Naive thymus-derived CD4-positive, alpha-beta T cell (primary cell): ENCODE measurements at regions of chr20 and their contacts with region 1.

Region 1: GRCh38 chr20:18566892-18567742 is at the start of gene SMIM26:
- DNase-seq: peak; percentile 85 to 94 (median 92)
- ATAC-seq: peak; percentile 99
- H3K4me3 ChIP-seq: peak within 1 kb of the TSS; percentile 76
- H3K4me3 Mint-ChIP-seq: peak within 1 kb of the TSS; percentile 93 to 99 (median 96)
- H3K27ac ChIP-seq: peak within 1 kb of the TSS; percentile 95
- H3K27ac Mint-ChIP-seq: peak within 1 kb of the TSS; percentile 92 to 100 (median 99)
- H3K4me1 ChIP-seq: peaks cover 4 to 15% of the 10 kb centered on the region in 2 donors
- H3K4me1 Mint-ChIP-seq: peaks cover 14 to 25% (median 22%) of the 10 kb centered on the region in 7 donors
- H3K27me3 ChIP-seq: no peaks in the 10 kb centered on the region
- H3K27me3 Mint-ChIP-seq: no peaks in the 10 kb centered on the region
- total RNA-seq, gene SMIM26: 51.2 to 78.4 (median 69.5) TPM

Region 2: DNA sequence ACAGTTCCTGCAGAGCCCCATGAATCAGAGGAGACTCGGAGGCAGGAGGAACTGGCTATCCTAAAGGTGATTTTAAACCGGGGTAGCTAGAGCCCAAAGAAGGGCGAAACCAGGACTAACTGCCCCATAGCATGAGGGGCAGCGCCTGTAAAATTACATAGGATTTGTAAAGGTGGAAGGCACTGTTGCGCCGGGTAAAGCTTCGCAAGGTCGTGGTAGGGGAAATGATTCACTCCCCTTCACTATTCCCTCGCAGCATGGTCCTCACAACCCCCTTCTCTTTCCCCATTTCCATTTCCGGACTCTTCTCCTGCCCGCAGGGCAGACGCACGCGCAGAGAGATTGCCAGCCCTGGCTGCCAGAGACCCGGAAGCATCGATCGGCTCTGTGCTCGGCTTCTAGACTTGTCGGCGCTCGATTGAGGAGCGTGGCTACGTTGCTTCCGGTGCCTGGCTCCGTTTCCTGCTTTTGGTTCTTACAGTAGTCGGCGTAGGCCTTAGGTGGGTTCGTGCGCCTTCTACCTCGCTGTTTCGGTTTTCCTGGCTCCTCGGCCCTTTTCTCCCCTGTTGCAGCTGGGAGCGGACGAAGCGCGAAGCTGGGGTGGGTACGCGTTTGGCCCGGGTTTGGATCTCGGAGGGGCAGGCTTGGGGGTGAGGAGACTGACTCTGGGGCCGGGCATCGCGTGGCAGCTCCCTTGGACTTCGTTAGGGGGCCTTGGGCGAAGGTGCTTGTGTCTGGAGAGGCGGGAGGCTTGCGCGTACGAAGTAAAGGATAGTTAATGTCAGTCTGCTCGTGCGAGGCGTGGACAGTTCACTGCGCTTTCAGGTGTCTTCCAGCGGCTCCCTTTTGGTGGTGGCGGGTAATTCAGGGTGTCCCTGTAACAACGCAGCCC is 1837.3 kb before region 1 on chr20 and contains the start of gene SNRPB2:
- CTCF ChIA-PET with region 1: no interaction called
- POLR2A ChIA-PET with region 1: no interaction called
- intact Hi-C with region 1: loop called in 1 of 2 experiments (anchors 2 kb)
- DNase-seq: peak; percentile 75 to 94 (median 90)
- ATAC-seq: peak; percentile 98
- H3K4me3 ChIP-seq: peak within 1 kb of the TSS; percentile 93
- H3K4me3 Mint-ChIP-seq: peak within 1 kb of the TSS; percentile 87 to 100 (median 99)
- H3K27ac ChIP-seq: peak within 1 kb of the TSS; percentile 94
- H3K27ac Mint-ChIP-seq: peak within 1 kb of the TSS; percentile 98 to 100 (median 100)
- H3K4me1 ChIP-seq: peaks cover 30 to 40% of the 10 kb centered on the region in 2 donors
- H3K4me1 Mint-ChIP-seq: peaks cover 32 to 60% (median 56%) of the 10 kb centered on the region in 7 donors
- H3K27me3 ChIP-seq: no peaks in the 10 kb centered on the region
- H3K27me3 Mint-ChIP-seq: peaks cover 9 to 25% (median 15%) of the 10 kb centered on the region in 5 donors
- total RNA-seq, gene SNRPB2: 30.8 to 97.0 (median 40.0) TPM

Region 3: DNA sequence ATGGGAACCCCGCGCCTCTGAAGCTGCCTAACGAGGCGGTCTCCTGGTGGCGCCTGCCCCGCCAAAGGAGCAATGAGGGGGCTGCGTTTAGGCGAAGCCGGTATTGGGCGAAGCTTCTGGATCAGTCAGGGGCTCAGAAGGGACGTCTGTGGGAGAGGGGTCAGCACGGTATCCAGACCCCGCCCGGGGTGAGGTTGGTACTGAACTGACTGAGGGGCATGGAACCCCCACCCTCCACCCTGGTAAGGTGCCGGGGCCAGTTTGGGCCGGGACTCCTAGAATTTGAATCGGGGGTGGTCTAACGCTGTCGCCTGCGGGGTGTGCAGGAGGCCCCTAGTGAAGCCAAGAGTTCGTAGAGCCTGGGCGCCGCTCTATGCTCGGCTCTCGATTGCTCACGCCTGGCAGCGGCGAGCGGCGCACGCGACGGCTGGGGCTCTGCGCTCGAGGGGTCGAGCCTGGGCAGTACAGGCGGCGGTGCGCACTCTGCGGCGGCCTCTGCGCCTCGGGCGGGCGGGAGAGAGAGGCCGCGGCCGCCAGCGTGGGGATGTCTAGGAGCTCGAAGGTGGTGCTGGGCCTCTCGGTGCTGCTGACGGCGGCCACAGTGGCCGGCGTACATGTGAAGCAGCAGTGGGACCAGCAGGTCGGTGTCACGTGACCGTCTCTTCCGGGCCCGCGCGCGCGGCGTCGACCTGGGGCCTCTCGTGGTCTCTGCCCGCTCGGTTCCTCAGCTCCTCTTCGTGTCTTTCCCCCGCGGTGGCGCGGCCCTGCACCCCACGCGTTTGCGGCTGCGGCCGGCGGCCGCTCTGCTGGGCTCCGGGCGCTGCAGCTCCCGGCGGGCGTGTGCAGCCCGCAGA is 429.5 kb before region 1 on chr20 and contains the starts of genes KAT14 and PET117:
- CTCF ChIA-PET with region 1: no interaction called
- POLR2A ChIA-PET with region 1: interaction called, 3 read pairs
- intact Hi-C with region 1: loop called in 1 of 2 experiments (anchors 1 kb)
- DNase-seq: peak; percentile 85 to 96 (median 93)
- ATAC-seq: peak; percentile 98
- H3K4me3 ChIP-seq: peak within 1 kb of the TSS; percentile 99
- H3K4me3 Mint-ChIP-seq: peak within 1 kb of the TSS; percentile 76 to 92 (median 88)
- H3K27ac ChIP-seq: peak within 1 kb of the TSS; percentile 89
- H3K27ac Mint-ChIP-seq: peak within 1 kb of the TSS; percentile 85 to 95 (median 92)
- H3K4me1 ChIP-seq: peaks cover 13 to 15% of the 10 kb centered on the region in 2 donors
- H3K4me1 Mint-ChIP-seq: peaks cover 23 to 44% (median 31%) of the 10 kb centered on the region in 7 donors
- H3K27me3 ChIP-seq: no peaks in the 10 kb centered on the region
- H3K27me3 Mint-ChIP-seq: peaks cover 0 to 7% (median 0%) of the 10 kb centered on the region in 5 donors
- total RNA-seq, gene KAT14: 12.3 to 26.7 (median 16.2) TPM
- total RNA-seq, gene PET117: 9.0 to 20.3 (median 11.7) TPM

Region 4: DNA sequence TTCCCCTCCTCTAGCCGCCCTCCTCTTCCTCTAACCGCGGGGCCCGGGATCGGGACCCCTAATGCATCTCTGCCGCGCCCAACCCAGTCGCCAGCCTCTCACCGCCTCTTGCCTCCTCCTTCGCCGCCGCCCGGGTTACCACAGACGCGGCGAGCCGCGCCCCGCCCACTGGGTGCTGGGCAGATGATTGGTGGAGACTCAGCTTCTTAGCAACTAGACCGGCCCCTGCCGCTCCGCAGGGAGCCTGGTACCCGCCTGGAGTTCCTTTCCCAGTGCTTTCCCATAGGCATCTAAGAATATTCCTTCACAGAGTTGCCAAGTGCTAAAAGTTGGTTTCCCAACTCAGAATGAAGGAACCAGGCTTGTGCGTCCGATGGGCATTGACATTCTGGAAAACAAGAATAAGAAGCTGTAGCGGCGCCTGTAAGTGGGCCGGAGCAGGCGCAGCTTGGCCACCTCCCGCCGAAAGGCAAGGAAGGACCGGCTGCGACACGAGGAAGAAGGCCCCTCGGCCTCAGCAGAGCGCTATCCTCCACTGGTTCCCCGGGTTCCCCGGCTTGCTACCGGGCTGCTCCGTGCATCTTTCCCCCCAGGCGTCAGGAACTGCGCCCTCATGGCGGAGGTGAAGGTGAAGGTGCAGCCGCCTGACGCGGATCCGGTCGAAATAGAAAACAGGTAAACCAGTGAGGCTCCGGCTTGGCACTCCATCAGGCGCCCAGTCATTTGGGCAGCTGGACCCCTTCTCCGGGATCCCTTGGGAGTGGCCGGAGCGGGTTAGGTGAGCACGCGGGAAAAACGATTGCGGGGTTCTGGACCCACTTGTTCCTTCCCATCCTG is 100.0 kb before region 1 on chr20 and contains the starts of genes DZANK1 and POLR3F:
- CTCF ChIA-PET with region 1: no interaction called
- POLR2A ChIA-PET with region 1: interaction called, 3 read pairs
- intact Hi-C with region 1: loop called (anchors 1 kb)
- DNase-seq: peak; percentile 85 to 93 (median 92)
- ATAC-seq: peak; percentile 97
- H3K4me3 ChIP-seq: peak within 1 kb of the TSS; percentile 93
- H3K4me3 Mint-ChIP-seq: peak within 1 kb of the TSS; percentile 89 to 99 (median 97)
- H3K27ac ChIP-seq: peak within 1 kb of the TSS; percentile 77
- H3K27ac Mint-ChIP-seq: peak within 1 kb of the TSS; percentile 93 to 99 (median 98)
- H3K4me1 ChIP-seq: peaks cover 7 to 14% of the 10 kb centered on the region in 2 donors
- H3K4me1 Mint-ChIP-seq: peaks cover 25 to 44% (median 37%) of the 10 kb centered on the region in 7 donors
- H3K27me3 ChIP-seq: no peaks in the 10 kb centered on the region
- H3K27me3 Mint-ChIP-seq: no peaks in the 10 kb centered on the region
- total RNA-seq, gene DZANK1: 1.2 to 3.5 (median 2.9) TPM
- total RNA-seq, gene POLR3F: 5.0 to 13.5 (median 11.5) TPM

Region 5: GRCh38 chr20:18507218-18508021 is 59.7 kb before region 1 on chr20 and contains the start of gene SEC23B:
- CTCF ChIA-PET with region 1: interaction called, 4 read pairs
- POLR2A ChIA-PET with region 1: interaction called, 20 read pairs
- intact Hi-C with region 1: loop called (anchors 1 kb)
- DNase-seq: peak; percentile 88 to 100 (median 99)
- ATAC-seq: peak; percentile 91
- H3K4me3 ChIP-seq: peak within 1 kb of the TSS; percentile 74
- H3K4me3 Mint-ChIP-seq: peak within 1 kb of the TSS; percentile 91 to 100 (median 100)
- H3K27ac ChIP-seq: peak within 1 kb of the TSS; percentile 90
- H3K27ac Mint-ChIP-seq: peak within 1 kb of the TSS; percentile 99 to 100 (median 100)
- H3K4me1 ChIP-seq: peaks cover 17 to 28% of the 10 kb centered on the region in 2 donors
- H3K4me1 Mint-ChIP-seq: peaks cover 25 to 59% (median 50%) of the 10 kb centered on the region in 7 donors
- H3K27me3 ChIP-seq: no peaks in the 10 kb centered on the region
- H3K27me3 Mint-ChIP-seq: peaks cover 0 to 2% (median 0%) of the 10 kb centered on the region in 5 donors
- total RNA-seq, gene SEC23B: 39.0 to 102 (median 40.9) TPM

Region 6: DNA sequence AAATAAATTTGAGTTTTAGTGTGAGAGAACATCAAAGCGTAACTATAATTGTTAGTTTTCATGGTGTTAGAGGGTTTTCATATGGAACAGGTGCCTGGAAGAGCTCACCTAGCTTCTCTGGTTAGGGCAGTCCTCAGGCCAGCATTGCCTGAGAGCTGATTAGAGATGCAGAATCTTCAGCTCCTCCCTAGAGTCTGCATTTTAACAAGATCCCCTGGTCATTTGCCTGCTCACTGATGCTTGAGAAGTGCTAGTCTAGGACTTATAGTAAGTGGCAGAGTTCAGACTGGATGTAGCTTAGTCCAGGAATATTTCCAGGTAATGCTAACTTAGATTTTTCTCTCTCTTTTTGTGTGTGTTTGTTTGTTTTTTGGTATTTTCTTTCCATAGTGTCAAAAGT is 21.6 kb before region 1 on chr20:
- CTCF ChIA-PET with region 1: no interaction called
- POLR2A ChIA-PET with region 1: no interaction called
- intact Hi-C with region 1: no loop called
- DNase-seq: no peak
- ATAC-seq: no peak
- H3K4me3 ChIP-seq: no peak overlapping the region
- H3K4me3 Mint-ChIP-seq: no peak overlapping the region
- H3K27ac ChIP-seq: no peak overlapping the region
- H3K27ac Mint-ChIP-seq: peak overlapping the region in 1 of 9 donors; percentile 34
- H3K4me1 ChIP-seq: no peaks in the 10 kb centered on the region
- H3K4me1 Mint-ChIP-seq: peaks cover 0 to 6% (median 0%) of the 10 kb centered on the region in 7 donors
- H3K27me3 ChIP-seq: no peaks in the 10 kb centered on the region
- H3K27me3 Mint-ChIP-seq: no peaks in the 10 kb centered on the region

Region 7: GRCh38 chr20:18793625-18794427 is 226.7 kb after region 1 on chr20:
- CTCF ChIA-PET with region 1: no interaction called
- POLR2A ChIA-PET with region 1: interaction called, 4 read pairs
- intact Hi-C with region 1: loop called (anchors 1 kb)
- DNase-seq: peak; percentile 62 to 94 (median 87)
- ATAC-seq: peak; percentile 99
- H3K4me3 ChIP-seq: peak overlapping the region; percentile 87
- H3K4me3 Mint-ChIP-seq: peak overlapping the region; percentile 85 to 99 (median 96)
- H3K27ac ChIP-seq: peak overlapping the region; percentile 92
- H3K27ac Mint-ChIP-seq: peak overlapping the region; percentile 97 to 100 (median 99)
- H3K4me1 ChIP-seq: peaks cover 8% of the 10 kb centered on the region in 2 donors
- H3K4me1 Mint-ChIP-seq: peaks cover 0 to 24% (median 18%) of the 10 kb centered on the region in 7 donors
- H3K27me3 ChIP-seq: no peaks in the 10 kb centered on the region
- H3K27me3 Mint-ChIP-seq: peaks cover 11 to 26% (median 21%) of the 10 kb centered on the region in 5 donors

Region 8: GRCh38 chr20:20052074-20052970 is 1485.2 kb after region 1 on chr20 and contains the starts of genes CFAP61 and CRNKL1:
- CTCF ChIA-PET with region 1: no interaction called
- POLR2A ChIA-PET with region 1: no interaction called
- intact Hi-C with region 1: loop called in 1 of 2 experiments (anchors 1 kb)
- DNase-seq: peak; percentile 95 to 99 (median 98)
- ATAC-seq: peak; percentile 96
- H3K4me3 ChIP-seq: peak within 1 kb of the TSS; percentile 99
- H3K4me3 Mint-ChIP-seq: peak within 1 kb of the TSS; percentile 94 to 100 (median 99)
- H3K27ac ChIP-seq: peak within 1 kb of the TSS; percentile 93
- H3K27ac Mint-ChIP-seq: peak within 1 kb of the TSS; percentile 94 to 100 (median 98)
- H3K4me1 ChIP-seq: peaks cover 0 to 16% of the 10 kb centered on the region in 2 donors
- H3K4me1 Mint-ChIP-seq: peaks cover 16 to 42% (median 31%) of the 10 kb centered on the region in 7 donors
- H3K27me3 ChIP-seq: no peaks in the 10 kb centered on the region
- H3K27me3 Mint-ChIP-seq: peaks cover 0 to 6% (median 0%) of the 10 kb centered on the region in 5 donors
- total RNA-seq, gene CFAP61: not detected
- total RNA-seq, gene CRNKL1: 17.4 to 32.1 (median 21.6) TPM